ENCODE measurements at regions of chr18 and their contacts with region 1.

Region 1: DNA sequence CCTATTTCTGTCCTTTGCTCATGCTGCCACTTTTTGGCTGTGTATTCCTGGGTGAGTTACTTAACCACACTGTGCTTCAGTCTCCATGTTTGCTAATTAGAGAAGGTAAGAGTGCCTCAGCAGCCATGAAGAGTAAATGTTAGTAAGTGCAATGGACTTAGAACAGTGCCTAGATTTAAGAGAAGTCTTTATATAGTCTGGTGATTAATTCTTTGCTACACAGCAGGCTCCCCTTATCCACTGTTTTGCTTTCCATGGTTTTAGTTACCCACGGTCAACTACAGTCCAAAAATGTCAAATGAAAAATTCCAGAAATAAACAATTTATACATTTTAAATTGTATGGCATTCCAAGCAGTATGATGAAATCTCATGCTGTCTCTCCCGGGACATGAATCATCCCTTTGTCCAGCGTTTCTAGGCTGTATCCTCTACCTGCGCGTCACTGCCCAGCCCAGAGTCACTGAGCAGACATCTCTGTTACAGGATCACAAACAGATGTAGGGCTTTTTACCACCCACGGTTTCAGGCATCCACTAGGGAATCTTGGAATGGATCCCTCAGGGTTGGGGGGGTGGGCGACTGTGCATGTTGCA is 91.0 kb downstream of the CTIF start:
- DNase-seq: no peak
- ATAC-seq: peak in 3 of 4 donors; percentile 53 to 76 (median 66)
- H3K4me3 ChIP-seq: no peak overlapping the region
- H3K27ac ChIP-seq: no peak overlapping the region
- H3K4me1 ChIP-seq: no peaks in the 10 kb centered on the region
- H3K27me3 ChIP-seq: no peaks in the 10 kb centered on the region
- CTCF ChIP-seq: no peak

Region 2: GRCh38 chr18:48475635-48476549 is 153.9 kb before region 1 on chr18:
- intact Hi-C with region 1: loop called in 1 of 2 experiments (anchors 10 kb)
- DNase-seq: peak in 1 of 2 donors; percentile 56
- ATAC-seq: peak; percentile 81 to 94 (median 89)
- H3K4me3 ChIP-seq: no peak overlapping the region
- H3K27ac ChIP-seq: no peak overlapping the region
- H3K4me1 ChIP-seq: no peaks in the 10 kb centered on the region
- H3K27me3 ChIP-seq: no peaks in the 10 kb centered on the region
- CTCF ChIP-seq: peak; percentile 87

Region 3: DNA sequence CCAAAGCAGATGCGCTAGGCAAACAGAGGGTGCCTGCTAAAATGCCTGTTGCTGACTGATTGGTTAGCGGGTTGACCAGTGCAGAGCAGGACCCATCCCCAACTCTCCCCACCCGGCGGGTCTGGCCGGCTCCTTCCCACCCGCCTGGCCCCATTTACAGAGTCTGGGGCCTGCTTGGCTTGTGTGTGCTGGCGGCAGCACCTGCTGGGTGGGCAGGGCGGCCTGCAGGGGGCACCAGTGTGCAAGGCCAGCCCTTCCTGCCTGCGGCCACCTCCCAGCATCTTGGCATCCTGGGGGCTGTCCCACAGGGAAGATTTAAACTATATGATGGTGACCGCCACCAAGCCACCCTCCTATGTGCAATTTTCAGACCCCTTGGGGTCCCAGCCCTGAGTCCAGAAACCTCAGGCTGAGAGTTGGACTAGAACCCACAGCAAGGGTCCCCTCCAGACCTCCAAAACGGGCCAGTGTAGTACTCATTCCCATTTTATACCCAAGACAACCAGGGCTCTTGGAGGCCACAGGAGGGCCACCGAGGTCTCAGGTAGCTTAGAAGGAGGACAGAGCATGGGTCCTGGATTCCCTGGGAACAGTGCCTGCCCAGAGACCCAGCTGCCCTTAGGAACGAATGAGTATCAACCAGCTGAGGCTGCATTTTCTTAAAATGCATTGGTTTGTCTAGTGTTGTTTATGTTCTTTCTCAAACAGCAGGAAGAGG is 147.4 kb after region 1 on chr18:
- intact Hi-C with region 1: no loop called
- DNase-seq: peak; percentile 63 to 81
- ATAC-seq: peak; percentile 62 to 69 (median 64)
- H3K4me3 ChIP-seq: no peak overlapping the region
- H3K27ac ChIP-seq: no peak overlapping the region
- H3K4me1 ChIP-seq: peaks cover 43% of the 10 kb centered on the region
- H3K27me3 ChIP-seq: no peaks in the 10 kb centered on the region
- CTCF ChIP-seq: peak; percentile 82

Region 4: GRCh38 chr18:48834413-48835031 is 204.7 kb after region 1 on chr18:
- intact Hi-C with region 1: no loop called
- DNase-seq: peak; percentile 73 to 78
- ATAC-seq: peak in 3 of 4 donors; percentile 44 to 53 (median 47)
- H3K4me3 ChIP-seq: no peak overlapping the region
- H3K27ac ChIP-seq: no peak overlapping the region
- H3K4me1 ChIP-seq: peaks cover 24% of the 10 kb centered on the region
- H3K27me3 ChIP-seq: no peaks in the 10 kb centered on the region
- CTCF ChIP-seq: no peak

Measured in psoas muscle (tissue), 8 donors.